GM10248 (cell line): ENCODE measurements at regions of chr1 and their contacts with region 1.

Region 1: DNA sequence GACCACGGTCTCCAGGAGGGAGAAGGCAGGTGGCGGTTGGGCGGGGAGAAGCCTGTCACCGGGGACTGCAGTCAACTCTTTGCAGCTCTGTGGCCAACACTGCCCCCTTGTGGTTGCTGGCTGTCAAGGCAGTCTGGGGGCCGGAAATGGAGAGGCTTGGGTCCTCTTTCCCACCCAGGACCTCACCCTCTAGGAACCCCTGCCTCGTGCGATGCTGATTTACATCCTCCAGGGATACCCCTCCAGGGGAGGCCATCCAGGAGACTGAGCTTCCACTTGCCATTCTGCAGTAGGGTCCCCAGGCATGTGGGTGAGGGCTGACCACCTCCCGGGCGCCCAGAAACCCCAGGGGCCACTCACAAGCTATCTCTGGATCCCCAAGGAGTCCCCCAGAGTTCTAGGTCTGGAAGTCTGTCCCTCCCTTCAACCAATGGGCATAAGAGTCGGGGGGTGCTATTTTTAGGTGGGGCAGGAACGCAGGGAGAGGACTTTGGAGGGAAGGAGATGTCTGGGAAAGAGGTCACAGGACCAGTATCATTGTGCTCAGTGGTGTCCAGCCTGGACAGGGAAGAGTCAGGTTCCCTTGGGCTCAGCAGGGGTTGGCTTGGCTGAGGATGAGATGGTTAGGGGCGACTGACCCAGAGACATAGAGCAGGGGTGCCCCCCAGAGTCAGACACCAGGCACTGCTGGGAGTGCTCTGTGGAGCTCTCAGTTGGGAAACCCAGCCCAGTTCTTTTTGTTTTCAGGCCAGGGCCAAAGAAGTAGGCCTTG is 7.1 kb upstream of the GPR61 start:
- DNase-seq: peak; percentile 89
- CTCF ChIP-seq: peak; percentile 94

Region 2: GRCh38 chr1:109201123-109201703 is 331.3 kb before region 1 on chr1:
- CTCF ChIA-PET with region 1: interaction called, 16 read pairs
- POLR2A ChIA-PET with region 1: no interaction called
- DNase-seq: peak; percentile 75
- CTCF ChIP-seq: peak; percentile 62

Region 3: DNA sequence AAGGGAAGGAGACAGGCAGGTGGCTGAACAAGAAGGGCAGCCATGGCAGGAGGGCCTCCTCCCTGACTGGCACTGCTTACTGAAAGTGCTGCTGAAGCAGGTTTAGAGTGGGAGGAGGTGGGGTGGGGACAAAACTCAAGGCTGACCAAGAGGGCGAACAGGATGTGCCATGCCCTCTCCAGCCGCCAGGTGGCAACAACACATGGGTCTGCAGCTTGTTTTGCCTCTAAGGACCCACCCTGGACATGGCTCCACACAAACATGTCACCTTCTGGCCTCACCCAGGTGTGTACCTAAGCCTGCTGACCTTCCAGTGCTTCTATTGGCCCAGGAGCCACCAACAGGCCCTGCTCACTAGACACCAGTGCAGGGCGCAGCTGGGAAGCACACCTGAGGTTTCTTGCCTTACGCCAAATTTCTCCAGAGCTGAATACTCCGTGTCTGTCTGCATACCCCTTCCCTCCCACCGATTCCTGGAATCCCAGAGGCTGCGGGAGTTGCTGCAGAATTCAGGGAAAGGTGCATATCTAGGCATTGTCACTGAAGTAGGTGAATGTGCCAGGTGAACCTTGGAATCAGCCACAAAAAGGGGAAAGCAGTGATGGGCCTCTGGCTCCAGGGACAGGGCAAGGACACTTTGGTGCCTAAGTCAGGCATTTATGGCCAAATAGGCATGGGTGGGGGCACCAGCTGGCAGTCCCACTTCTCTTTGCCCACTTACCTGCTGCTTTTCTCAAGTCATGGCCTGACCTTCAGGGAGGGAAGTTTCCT is 254.9 kb before region 1 on chr1:
- CTCF ChIA-PET with region 1: interaction called, 102 read pairs
- POLR2A ChIA-PET with region 1: no interaction called
- DNase-seq: peak; percentile 88
- CTCF ChIP-seq: peak; percentile 91

Region 4: DNA sequence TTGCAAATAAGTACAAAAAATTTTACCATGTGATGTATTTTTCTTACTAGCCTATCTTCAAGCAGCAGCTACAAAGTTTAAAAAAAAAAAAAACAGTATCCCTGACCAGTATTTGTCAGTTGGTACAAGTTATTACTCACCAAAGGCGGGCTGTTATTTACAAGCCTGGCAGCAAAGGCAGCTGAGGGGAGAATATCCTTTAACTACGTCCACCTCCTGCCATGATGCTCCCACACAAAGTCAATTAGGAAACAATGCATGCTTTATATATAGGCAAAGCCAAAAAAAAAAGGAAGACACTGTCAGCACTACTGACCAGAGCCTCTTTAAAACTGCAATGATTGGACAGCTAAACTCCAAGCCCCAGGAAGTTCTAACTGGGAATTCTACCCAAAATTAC is 120.0 kb before region 1 on chr1:
- CTCF ChIA-PET with region 1: interaction called, 12 read pairs
- POLR2A ChIA-PET with region 1: no interaction called
- DNase-seq: no peak
- CTCF ChIP-seq: no peak

Region 5: GRCh38 chr1:109454497-109455133 is 77.9 kb before region 1 on chr1:
- CTCF ChIA-PET with region 1: no interaction called
- POLR2A ChIA-PET with region 1: no interaction called
- DNase-seq: no peak
- CTCF ChIP-seq: no peak

Region 6: DNA sequence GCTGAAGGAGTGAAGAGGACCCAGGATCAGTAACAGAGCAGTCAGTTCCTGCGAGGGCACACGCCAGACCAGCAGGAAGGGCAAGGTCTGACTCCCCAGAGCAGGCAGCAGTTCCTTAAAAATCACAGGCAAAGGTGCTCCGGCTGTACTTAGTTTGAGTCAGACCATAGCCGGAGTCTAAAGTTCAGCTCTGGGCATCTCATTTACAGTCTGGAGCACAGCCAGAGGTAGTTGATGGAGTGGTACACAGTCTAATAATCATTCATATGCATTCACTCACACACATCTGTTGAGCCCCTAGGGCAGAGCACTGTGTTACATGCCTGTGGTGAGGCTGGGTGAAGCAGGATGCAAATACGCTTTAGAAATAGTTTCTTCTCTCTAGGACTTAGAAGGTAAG is 15.7 kb before region 1 on chr1:
- CTCF ChIA-PET with region 1: interaction called, 1,898 read pairs
- POLR2A ChIA-PET with region 1: no interaction called
- DNase-seq: no peak
- CTCF ChIP-seq: no peak

Region 7: DNA sequence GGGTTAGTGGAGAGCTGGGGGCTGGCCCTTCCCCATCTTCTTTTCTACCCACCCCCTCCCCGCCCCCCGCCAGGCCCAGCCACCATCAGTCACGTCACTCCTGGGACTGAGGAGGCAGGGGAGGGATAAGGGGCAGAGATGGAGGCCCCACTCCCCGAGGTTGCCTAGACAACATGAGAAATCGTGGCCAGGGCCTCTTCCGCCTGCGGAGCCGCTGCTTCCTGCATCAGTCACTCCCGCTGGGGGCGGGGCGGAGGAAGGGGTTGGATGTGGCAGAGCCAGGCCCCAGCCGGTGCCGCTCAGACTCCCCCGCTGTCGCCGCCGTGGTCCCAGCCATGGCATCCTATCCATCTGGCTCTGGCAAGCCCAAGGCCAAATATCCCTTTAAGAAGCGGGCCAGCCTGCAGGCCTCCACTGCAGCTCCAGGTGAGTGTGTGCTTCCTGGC is 88.3 kb after region 1 on chr1:
- CTCF ChIA-PET with region 1: interaction called, 13 read pairs
- POLR2A ChIA-PET with region 1: no interaction called
- DNase-seq: peak; percentile 95
- CTCF ChIP-seq: no peak

Region 8: GRCh38 chr1:109984456-109985275 is 452.1 kb after region 1 on chr1 and contains the start of gene AHCYL1:
- CTCF ChIA-PET with region 1: interaction called, 11 read pairs
- POLR2A ChIA-PET with region 1: no interaction called
- DNase-seq: peak; percentile 100
- CTCF ChIP-seq: peak; percentile 96